Activated B cell treated with CpG ODN at 0.5 μM for 24 hours (primary cell): ENCODE measurements at regions of chr6 and their contacts with region 1.

Region 1: GRCh38 chr6:158322724-158323560 is 10.7 kb downstream of the TULP4 start:
- DNase-seq: no peak
- ATAC-seq: peak; percentile 59
- H3K4me3 Mint-ChIP-seq: peak overlapping the region; percentile 25
- H3K27ac Mint-ChIP-seq: peak overlapping the region; percentile 57
- H3K4me1 Mint-ChIP-seq: peaks cover 79% of the 10 kb centered on the region
- H3K27me3 Mint-ChIP-seq: no peaks in the 10 kb centered on the region
- CTCF ChIP-seq: no peak

Region 2: DNA sequence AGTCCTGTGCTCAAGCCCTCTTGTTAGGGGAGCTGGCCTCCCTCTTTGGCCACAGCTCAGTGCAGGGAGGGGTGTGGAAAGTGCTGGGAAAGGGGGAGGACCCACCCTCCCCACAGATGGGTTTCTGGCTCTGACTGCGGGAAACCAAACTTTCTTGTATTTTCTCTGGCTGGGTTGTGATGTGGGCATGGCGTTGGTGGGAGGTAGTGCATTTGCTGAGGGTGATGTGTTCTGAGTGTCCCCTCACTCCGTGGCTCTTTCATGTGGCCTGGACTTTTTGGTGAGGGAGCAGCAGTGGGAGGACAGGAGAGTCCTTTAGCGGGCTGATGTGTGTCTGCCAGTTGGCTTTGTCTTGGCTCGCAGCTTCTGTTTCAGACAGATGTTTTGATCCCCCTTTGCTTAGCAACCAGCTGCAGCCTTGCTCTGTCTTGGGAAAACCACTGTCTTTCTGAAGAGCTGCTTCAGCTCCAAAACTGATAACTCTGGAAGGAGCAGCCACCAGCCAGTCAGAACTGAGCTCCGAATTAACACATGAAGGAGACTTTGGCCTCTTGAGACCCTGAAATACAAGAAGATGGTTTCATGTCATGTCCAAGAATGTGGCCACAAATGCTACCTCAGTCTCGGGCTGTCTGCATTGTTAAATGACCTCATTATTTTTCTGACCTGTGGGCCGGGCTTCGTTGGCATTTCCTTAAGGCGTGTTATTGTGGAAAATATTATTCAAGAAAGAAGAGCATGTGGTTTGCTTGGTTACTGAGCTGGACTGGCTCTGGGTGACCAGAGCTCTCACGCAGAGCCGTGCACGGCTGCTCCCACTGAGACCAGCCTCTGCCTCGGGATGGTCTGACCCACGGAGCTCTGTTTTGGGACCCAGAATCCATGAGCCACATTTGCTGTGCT is 319.7 kb before region 1 on chr6:
- CTCF ChIA-PET with region 1: no interaction called
- POLR2A ChIA-PET with region 1: no interaction called
- intact Hi-C with region 1: no loop called
- DNase-seq: no peak
- ATAC-seq: no peak
- H3K4me3 Mint-ChIP-seq: no peak overlapping the region
- H3K27ac Mint-ChIP-seq: no peak overlapping the region
- H3K4me1 Mint-ChIP-seq: peaks cover 1% of the 10 kb centered on the region
- H3K27me3 Mint-ChIP-seq: no peaks in the 10 kb centered on the region
- CTCF ChIP-seq: no peak

Region 3: DNA sequence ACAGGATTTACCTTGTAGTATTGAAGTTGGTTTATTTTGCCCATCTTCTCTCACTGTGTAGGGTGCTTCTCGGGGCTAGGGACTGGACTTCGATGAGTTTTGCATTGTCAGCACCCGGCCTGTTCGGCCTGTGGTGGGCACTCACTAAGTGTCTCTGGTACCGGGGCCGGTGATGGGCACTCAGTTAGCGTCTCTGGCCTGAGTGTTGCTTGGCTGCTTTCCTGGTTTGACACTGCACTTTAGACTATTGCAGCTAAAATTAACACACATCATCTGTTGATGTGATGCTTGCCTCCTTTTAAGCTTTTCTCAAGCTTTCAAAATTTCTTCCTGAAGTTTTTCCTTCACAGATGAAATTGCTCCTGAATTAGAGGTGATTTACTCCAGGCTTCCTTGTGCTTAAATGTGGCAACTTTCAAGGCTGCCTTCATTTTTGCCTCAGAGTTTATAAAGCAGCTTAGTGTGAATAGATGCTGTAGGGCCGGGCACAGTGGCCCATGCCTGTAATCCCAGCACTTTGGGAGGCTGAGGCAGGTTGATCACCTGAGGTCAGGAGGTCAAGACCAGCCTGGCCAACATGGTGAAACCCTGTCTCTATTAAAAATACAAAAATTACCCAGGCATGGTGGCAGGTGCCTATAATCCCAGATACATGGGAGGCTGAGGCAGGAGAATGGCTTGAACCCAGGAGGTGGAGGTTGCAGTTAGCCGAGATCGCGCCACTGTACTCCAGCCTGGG is 52.4 kb before region 1 on chr6:
- CTCF ChIA-PET with region 1: no interaction called
- POLR2A ChIA-PET with region 1: interaction called, 14 read pairs
- intact Hi-C with region 1: loop called (anchors 10 kb)
- DNase-seq: no peak
- ATAC-seq: no peak
- H3K4me3 Mint-ChIP-seq: no peak overlapping the region
- H3K27ac Mint-ChIP-seq: no peak overlapping the region
- H3K4me1 Mint-ChIP-seq: peaks cover 37% of the 10 kb centered on the region
- H3K27me3 Mint-ChIP-seq: no peaks in the 10 kb centered on the region
- CTCF ChIP-seq: no peak